ENCODE measurements at regions of chr3 and their contacts with region 1.

Region 1: GRCh38 chr3:51617597-51617996 is 53.5 kb upstream of the TEX264 start:
- DNase-seq: no peak
- ATAC-seq: no peak
- H3K4me3 Mint-ChIP-seq: no peak overlapping the region
- H3K27ac Mint-ChIP-seq: no peak overlapping the region
- H3K4me1 Mint-ChIP-seq: peaks cover 5% of the 10 kb centered on the region
- H3K27me3 Mint-ChIP-seq: no peaks in the 10 kb centered on the region
- CTCF ChIP-seq: no peak

Region 2: DNA sequence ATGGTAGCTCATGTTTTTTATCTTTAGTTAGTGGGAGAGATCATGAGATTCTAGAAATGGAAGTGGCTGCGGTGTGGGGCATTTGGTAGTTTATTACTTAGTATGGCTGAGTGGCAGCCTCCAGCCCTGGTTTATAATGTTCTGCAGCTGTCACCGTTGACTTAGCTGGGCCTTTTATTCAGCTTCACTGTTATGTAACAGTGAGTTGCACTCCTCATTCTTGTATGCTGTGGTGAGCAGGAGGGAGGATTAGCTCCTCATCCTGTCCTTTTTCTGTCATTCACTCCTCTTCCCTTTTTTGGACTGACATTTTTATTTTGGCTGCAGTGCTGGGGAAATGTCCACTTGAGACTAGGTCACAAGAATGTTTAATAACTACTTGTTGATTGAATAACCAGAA is 49.6 kb before region 1 on chr3:
- CTCF ChIA-PET with region 1: no interaction called
- POLR2A ChIA-PET with region 1: no interaction called
- intact Hi-C with region 1: loop called (anchors 10 kb)
- DNase-seq: no peak
- ATAC-seq: no peak
- H3K4me3 Mint-ChIP-seq: no peak overlapping the region
- H3K27ac Mint-ChIP-seq: no peak overlapping the region
- H3K4me1 Mint-ChIP-seq: peaks cover 20% of the 10 kb centered on the region
- H3K27me3 Mint-ChIP-seq: no peaks in the 10 kb centered on the region
- CTCF ChIP-seq: no peak